Endothelial cell of umbilical vein (primary cell): ENCODE measurements at regions of chr11 and their contacts with region 1.

Region 1: DNA sequence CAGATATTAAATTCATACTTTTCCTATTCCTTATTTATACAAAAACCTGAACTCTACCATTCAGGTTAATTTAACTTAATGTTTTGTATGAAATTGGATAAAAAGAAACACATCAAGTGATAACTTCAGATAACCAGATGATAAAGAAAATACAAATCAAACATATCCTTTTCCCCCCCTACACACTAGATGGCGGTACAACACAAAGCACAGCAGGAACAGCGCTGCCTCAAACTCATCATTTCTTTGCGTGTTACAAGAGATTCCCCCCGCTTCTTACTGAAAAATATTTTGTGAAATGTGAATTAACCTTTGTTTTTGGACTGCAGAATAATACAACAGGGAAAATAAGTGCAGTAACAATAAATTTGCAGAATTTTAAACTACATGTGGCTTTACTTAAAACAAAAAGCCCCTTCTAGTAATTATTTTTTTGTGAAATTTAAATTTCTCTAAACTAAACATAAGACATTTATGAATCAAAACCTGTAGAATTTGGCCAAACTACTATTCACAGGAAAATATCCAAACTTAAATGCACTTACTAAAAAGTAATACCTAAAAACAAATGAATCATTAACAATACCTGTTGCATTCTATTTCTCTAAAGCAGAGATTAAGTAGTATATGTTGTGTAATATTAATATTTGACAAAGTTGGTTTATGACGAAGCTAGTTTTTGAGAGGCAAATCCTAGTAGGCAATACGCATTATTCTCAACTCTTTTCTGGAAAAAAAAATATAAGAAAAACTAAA is 74.4 kb downstream of the ARHGAP32 start:
- DNase-seq: peak; percentile 77
- H3K4me3 ChIP-seq: no peak overlapping the region
- H3K27ac ChIP-seq: no peak overlapping the region
- H3K4me1 ChIP-seq: no peaks in the 10 kb centered on the region
- H3K27me3 ChIP-seq: no peaks in the 10 kb centered on the region
- CTCF ChIP-seq: peak; percentile 65 to 83
- POLR2A ChIP-seq: no peak

Region 2: GRCh38 chr11:129230006-129230405 is 112.2 kb after region 1 on chr11:
- CTCF ChIA-PET with region 1: no interaction called
- POLR2A ChIA-PET with region 1: no interaction called
- dilution Hi-C with region 1: no loop called
- intact Hi-C with region 1: loop called (anchors 5 kb)
- DNase-seq: peak; percentile 12
- H3K4me3 ChIP-seq: no peak overlapping the region
- H3K27ac ChIP-seq: no peak overlapping the region
- H3K4me1 ChIP-seq: peaks cover 1% of the 10 kb centered on the region
- H3K27me3 ChIP-seq: no peaks in the 10 kb centered on the region
- CTCF ChIP-seq: no peak
- POLR2A ChIP-seq: no peak

Region 3: DNA sequence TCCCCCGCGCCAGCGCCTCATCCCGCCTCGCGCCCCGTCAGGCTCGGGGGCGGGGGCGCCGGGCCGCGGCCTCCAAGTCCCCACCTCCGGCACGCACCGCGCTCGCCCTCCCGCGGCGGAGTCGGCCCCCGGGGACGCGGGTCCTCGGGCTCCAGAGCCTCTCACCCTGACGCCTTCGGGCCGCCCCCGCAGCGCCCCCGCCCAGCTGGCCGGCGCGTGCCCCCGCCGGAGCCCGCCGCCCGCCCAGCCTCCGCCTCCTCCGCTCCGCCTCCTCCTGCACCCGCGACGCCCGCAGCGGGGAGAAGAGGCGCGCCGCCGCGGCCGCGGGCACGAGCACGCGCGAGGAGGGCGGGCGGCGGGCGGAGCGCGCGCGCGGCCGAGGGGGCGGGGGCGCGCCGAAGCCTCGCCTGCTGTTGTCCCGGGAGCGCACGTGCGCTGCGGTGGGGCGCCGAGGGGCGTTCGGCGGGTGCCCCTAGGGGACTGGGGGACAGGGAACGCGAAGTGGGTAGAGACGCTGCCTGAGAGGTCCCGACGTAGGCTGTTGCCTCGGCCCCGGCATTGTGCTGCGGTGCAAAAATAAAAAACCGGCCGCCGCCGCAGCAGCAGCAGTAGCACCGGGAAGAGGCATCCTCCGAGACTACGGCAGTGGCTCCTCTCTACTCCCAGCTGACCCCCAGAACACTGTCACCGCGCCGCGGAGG is 161.7 kb after region 1 on chr11:
- CTCF ChIA-PET with region 1: no interaction called
- POLR2A ChIA-PET with region 1: no interaction called
- dilution Hi-C with region 1: no loop called
- intact Hi-C with region 1: loop called (anchors 1 kb)
- DNase-seq: peak; percentile 70
- H3K4me3 ChIP-seq: peak overlapping the region; percentile 40 to 64 (median 51)
- H3K27ac ChIP-seq: no peak overlapping the region
- H3K4me1 ChIP-seq: peaks cover 8% of the 10 kb centered on the region
- H3K27me3 ChIP-seq: peaks cover 0 to 2% of the 10 kb centered on the region in 2 experiments
- CTCF ChIP-seq: no peak
- POLR2A ChIP-seq: no peak

Region 4: DNA sequence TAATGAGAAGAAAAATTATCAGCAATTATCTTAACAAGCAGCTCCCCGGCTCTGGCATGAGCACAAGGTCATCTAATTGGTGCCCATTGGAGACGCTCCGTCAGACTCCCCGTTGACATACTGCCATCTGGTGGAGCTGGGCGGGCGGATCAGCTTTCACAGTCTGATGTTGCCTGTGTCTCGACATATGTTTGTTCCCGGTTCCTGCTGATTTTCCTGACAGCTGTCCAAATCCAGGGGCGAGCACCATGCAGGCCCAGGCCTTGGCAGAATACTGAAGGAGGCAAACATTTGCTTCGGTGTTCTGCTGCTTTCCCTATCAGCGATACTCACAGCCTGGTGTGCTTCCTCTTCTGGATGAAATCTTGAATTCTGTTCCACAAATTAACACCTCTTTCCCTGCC is 214.1 kb after region 1 on chr11:
- CTCF ChIA-PET with region 1: interaction called, 99 read pairs
- POLR2A ChIA-PET with region 1: no interaction called
- dilution Hi-C with region 1: no loop called
- intact Hi-C with region 1: loop called (anchors 1 kb)
- DNase-seq: peak; percentile 76
- H3K4me3 ChIP-seq: no peak overlapping the region
- H3K27ac ChIP-seq: no peak overlapping the region
- H3K4me1 ChIP-seq: no peaks in the 10 kb centered on the region
- H3K27me3 ChIP-seq: no peaks in the 10 kb centered on the region
- CTCF ChIP-seq: peak; percentile 91 to 92
- POLR2A ChIP-seq: no peak

Region 5: DNA sequence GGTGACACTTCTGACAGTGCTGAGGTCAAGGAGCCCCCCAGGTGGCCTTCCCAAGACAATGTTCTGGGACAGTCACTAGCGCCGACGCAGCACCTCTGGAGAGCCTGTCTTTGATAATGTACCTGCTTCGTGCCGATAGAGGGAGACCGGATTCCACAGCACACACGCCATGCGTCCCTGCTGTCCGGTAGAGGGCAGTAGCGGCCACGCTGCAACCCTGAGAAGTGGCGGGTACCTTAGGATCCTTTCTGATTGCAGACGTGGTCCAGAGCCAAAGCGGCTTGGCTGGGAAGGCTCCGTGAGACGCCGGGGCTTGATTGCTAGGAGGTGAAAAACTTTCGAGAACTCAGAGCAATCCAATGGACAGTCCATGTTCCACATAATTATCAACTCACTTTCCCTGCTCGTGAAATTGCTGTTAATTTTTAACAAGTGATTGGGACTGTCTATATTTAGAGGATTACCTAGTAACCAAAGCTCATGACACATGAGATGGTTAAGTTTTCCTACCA is 246.4 kb after region 1 on chr11:
- CTCF ChIA-PET with region 1: interaction called, 5 read pairs
- POLR2A ChIA-PET with region 1: no interaction called
- dilution Hi-C with region 1: no loop called
- intact Hi-C with region 1: loop called (anchors 1 kb)
- DNase-seq: peak; percentile 87
- H3K4me3 ChIP-seq: no peak overlapping the region
- H3K27ac ChIP-seq: no peak overlapping the region
- H3K4me1 ChIP-seq: no peaks in the 10 kb centered on the region
- H3K27me3 ChIP-seq: peaks cover 16 to 47% of the 10 kb centered on the region in 2 experiments
- CTCF ChIP-seq: peak; percentile 99 to 100
- POLR2A ChIP-seq: no peak

Region 6: GRCh38 chr11:129695575-129696308 is 578.0 kb after region 1 on chr11:
- CTCF ChIA-PET with region 1: interaction called, 3 read pairs
- POLR2A ChIA-PET with region 1: no interaction called
- dilution Hi-C with region 1: no loop called
- intact Hi-C with region 1: loop called (anchors 1 kb)
- DNase-seq: peak; percentile 28
- H3K4me3 ChIP-seq: peak overlapping the region in 1 of 3 experiments; percentile 15
- H3K27ac ChIP-seq: no peak overlapping the region
- H3K4me1 ChIP-seq: peaks cover 8% of the 10 kb centered on the region
- H3K27me3 ChIP-seq: no peaks in the 10 kb centered on the region
- CTCF ChIP-seq: peak; percentile 57 to 82
- POLR2A ChIP-seq: no peak

Region 7: DNA sequence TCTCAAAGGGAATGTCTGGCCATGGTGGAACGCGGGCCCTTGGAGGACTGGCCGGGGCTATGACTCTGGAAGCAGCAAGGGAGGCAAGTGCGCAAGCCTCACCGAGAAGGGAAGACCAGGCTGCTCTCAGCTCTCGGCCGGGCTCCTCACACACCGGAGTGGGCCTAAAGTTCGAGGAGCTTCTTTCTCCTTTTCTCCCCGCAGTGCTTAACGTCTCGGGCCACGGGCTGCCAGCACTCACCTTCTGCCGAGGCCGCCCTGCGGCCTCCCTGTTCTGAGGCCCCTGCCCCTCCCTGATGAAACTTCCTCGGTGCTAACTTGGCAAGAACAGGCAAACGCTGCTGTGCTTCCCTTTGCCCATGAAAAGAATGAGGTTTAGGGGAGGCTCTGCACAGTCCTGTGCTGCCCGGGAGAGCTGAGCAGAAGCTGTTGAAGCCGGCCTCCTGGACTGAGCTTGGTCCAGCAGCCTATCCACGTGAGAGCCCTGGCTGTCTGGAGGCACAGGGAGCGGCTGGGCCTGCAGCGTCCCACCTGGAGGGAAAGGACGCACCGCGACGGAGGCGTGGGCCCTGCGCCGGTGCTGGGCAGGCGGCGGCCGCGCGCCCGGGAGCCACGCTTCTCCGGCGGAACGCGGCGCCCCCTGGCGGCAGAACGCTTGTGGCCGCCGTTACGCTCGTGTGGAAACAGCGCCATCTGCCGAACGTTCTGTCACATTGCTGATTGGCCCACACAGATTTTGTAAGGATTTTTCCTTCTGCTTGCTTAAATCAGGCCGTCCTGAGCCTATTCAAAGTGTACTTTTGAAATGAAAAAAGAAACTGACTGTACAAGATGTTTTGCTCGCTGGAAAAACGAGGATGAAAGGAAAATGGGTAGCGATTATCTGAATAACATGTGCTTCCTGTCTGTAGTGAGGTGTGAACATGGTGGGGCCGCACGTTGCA is 632.8 kb after region 1 on chr11:
- CTCF ChIA-PET with region 1: interaction called, 3 read pairs
- POLR2A ChIA-PET with region 1: no interaction called
- dilution Hi-C with region 1: no loop called
- intact Hi-C with region 1: loop called (anchors 1 kb)
- DNase-seq: peak; percentile 72
- H3K4me3 ChIP-seq: no peak overlapping the region
- H3K27ac ChIP-seq: no peak overlapping the region
- H3K4me1 ChIP-seq: no peaks in the 10 kb centered on the region
- H3K27me3 ChIP-seq: peaks cover 0 to 4% of the 10 kb centered on the region in 2 experiments
- CTCF ChIP-seq: peak; percentile 96 to 98
- POLR2A ChIP-seq: no peak